ENCODE measurements at regions of chr6 and their contacts with region 1.

Region 1: GRCh38 chr6:84428300-84428907 is 201.0 kb upstream of the CEP162 start:
- DNase-seq: no peak
- ATAC-seq: peak; percentile 91
- H3K4me3 ChIP-seq: no peak overlapping the region
- H3K27ac ChIP-seq: no peak overlapping the region
- H3K4me1 ChIP-seq: no peaks in the 10 kb centered on the region
- H3K27me3 ChIP-seq: no peaks in the 10 kb centered on the region
- CTCF ChIP-seq: peak; percentile 74 to 79 (median 77)
- EP300 ChIP-seq: no peak
- POLR2A ChIP-seq: no peak
- RAD21 ChIP-seq: peak; percentile 69

Region 2: DNA sequence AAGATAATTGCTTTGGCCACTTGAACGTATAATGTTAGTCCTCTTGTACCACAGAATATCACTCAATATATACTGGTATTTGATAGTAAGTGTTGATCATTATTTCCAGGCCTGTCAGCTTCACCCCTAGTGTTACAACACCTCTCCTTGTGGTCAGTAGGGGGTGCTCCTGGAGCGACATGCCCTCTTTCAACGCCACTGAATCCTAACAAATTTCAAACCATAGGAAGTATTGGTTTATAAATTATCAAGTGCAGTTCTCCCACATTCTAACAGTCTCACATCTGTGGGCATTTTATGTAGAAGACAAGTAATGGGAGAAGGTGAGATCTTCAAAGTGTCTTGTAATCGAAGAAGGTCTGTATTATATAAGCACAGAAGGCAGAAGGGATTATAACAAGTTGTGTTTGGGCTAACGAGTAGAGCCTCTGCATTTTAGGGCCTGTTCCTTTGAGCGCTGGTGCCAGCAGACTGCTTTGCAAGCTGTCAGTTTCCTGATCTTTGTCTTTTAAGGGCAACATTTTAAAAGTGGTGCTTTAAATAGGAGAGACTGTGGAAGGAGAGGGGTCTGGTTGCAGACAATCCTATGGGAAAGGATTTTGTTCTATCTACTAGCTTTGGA is 143.9 kb before region 1 on chr6:
- CTCF ChIA-PET with region 1: interaction called, 49 read pairs
- POLR2A ChIA-PET with region 1: interaction called, 3 read pairs
- RAD21 ChIA-PET with region 1: interaction called, 16 read pairs
- SMC1A ChIA-PET with region 1: interaction called, 50 read pairs
- in situ Hi-C with region 1: no loop called
- intact Hi-C with region 1: loop called (anchors 5 kb)
- DNase-seq: no peak
- ATAC-seq: peak; percentile 88
- H3K4me3 ChIP-seq: no peak overlapping the region
- H3K27ac ChIP-seq: no peak overlapping the region
- H3K4me1 ChIP-seq: no peaks in the 10 kb centered on the region
- H3K27me3 ChIP-seq: no peaks in the 10 kb centered on the region
- CTCF ChIP-seq: peak; percentile 55 to 63 (median 62)
- EP300 ChIP-seq: no peak
- POLR2A ChIP-seq: no peak
- RAD21 ChIP-seq: peak; percentile 80

Region 3: GRCh38 chr6:84449220-84449619 is 20.8 kb after region 1 on chr6:
- CTCF ChIA-PET with region 1: interaction called, 18 read pairs
- POLR2A ChIA-PET with region 1: no interaction called
- RAD21 ChIA-PET with region 1: interaction called, 4 read pairs
- SMC1A ChIA-PET with region 1: interaction called, 17 read pairs
- in situ Hi-C with region 1: no loop called
- intact Hi-C with region 1: no loop called
- DNase-seq: no peak
- ATAC-seq: no peak
- H3K4me3 ChIP-seq: no peak overlapping the region
- H3K27ac ChIP-seq: no peak overlapping the region
- H3K4me1 ChIP-seq: no peaks in the 10 kb centered on the region
- H3K27me3 ChIP-seq: no peaks in the 10 kb centered on the region
- CTCF ChIP-seq: no peak
- EP300 ChIP-seq: no peak
- POLR2A ChIP-seq: no peak
- RAD21 ChIP-seq: no peak

Region 4: GRCh38 chr6:84568971-84569370 is 140.6 kb after region 1 on chr6:
- CTCF ChIA-PET with region 1: interaction called, 55 read pairs
- POLR2A ChIA-PET with region 1: no interaction called
- RAD21 ChIA-PET with region 1: interaction called, 27 read pairs
- SMC1A ChIA-PET with region 1: interaction called, 37 read pairs
- in situ Hi-C with region 1: no loop called
- intact Hi-C with region 1: loop called (anchors 1 kb)
- DNase-seq: no peak
- ATAC-seq: peak; percentile 58; the same call in 2 of the 3 replicates
- H3K4me3 ChIP-seq: no peak overlapping the region
- H3K27ac ChIP-seq: no peak overlapping the region
- H3K4me1 ChIP-seq: no peaks in the 10 kb centered on the region
- H3K27me3 ChIP-seq: no peaks in the 10 kb centered on the region
- CTCF ChIP-seq: peak in 2 of 3 experiments; percentile 10 to 41; a peak in 2 of 6 replicates
- EP300 ChIP-seq: no peak
- POLR2A ChIP-seq: no peak
- RAD21 ChIP-seq: peak; percentile 51

Region 5: DNA sequence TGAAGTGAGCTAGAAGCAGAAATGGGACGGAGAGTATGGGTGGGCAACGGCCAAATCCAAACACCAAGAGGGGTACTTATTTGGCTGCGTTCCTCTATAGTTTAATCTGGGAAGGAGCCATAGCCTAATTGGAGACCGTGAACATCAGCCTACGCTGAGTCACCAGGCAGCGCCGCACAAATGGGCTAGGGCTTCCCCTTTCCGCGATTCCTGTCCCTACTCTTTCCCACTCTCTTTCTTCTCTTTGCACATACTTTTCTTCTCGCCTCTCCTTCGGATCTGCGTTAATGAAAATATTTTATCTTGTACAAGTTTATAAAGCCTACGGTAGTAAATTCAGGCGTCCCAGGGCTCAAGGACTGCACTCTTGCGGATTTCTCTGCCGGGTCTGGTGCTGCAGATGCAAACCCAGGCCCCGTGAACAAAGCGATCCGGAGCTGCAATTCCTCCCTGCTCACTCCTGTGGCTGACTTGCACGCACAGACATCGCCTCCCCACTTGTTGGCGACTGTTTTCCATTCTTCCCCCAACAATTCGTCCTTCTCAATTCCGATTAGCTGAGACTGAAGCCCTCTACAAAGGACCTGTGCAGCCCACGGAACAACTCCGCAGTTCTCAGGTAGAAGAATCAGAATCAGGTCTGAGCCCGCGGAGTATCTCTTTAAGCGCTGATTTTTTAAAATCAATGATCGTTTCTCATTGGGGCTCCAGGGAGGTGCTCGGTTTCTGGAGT is 340.2 kb after region 1 on chr6:
- CTCF ChIA-PET with region 1: interaction called, 11 read pairs
- POLR2A ChIA-PET with region 1: no interaction called
- RAD21 ChIA-PET with region 1: interaction called, 3 read pairs
- SMC1A ChIA-PET with region 1: interaction called, 4 read pairs
- in situ Hi-C with region 1: no loop called
- intact Hi-C with region 1: no loop called
- DNase-seq: no peak
- ATAC-seq: peak; percentile 72
- H3K4me3 ChIP-seq: no peak overlapping the region
- H3K27ac ChIP-seq: no peak overlapping the region
- H3K4me1 ChIP-seq: no peaks in the 10 kb centered on the region
- H3K27me3 ChIP-seq: peaks cover 2 to 20% of the 10 kb centered on the region in 2 experiments
- CTCF ChIP-seq: no peak
- EP300 ChIP-seq: no peak
- POLR2A ChIP-seq: no peak
- RAD21 ChIP-seq: no peak

Region 6: DNA sequence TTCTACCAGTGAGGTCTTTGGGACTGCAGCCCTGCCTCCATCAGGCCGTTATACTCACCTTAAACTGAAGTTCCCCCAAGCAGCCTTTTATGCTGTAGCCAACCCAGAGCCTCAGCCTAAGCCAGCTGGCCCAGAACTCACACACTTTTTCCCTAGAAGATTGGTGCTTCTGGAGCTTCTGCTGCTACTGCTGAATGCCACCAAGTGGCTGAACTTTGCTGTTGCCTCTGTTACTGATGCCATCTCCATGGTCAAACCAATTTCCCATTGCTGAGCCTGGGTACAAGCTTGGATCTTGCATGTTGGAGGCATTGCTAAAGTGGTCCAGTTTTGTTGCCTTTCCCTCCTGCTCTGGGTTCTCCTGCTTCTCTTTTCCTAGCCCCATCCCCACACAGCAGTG is 351.0 kb after region 1 on chr6:
- CTCF ChIA-PET with region 1: interaction called, 14 read pairs
- POLR2A ChIA-PET with region 1: no interaction called
- RAD21 ChIA-PET with region 1: interaction called, 8 read pairs
- SMC1A ChIA-PET with region 1: interaction called, 3 read pairs
- in situ Hi-C with region 1: no loop called
- intact Hi-C with region 1: loop called (anchors 1 kb)
- DNase-seq: no peak
- ATAC-seq: no peak
- H3K4me3 ChIP-seq: no peak overlapping the region
- H3K27ac ChIP-seq: no peak overlapping the region
- H3K4me1 ChIP-seq: no peaks in the 10 kb centered on the region
- H3K27me3 ChIP-seq: peaks cover 0 to 2% of the 10 kb centered on the region in 2 experiments; a peak in 3 of 4 replicates
- CTCF ChIP-seq: 0 out of 6 replicates have a peak, but pooled peaks of 1 of the 3 experiments have one; percentile 10
- EP300 ChIP-seq: no peak
- POLR2A ChIP-seq: no peak
- RAD21 ChIP-seq: no peak

Region 7: DNA sequence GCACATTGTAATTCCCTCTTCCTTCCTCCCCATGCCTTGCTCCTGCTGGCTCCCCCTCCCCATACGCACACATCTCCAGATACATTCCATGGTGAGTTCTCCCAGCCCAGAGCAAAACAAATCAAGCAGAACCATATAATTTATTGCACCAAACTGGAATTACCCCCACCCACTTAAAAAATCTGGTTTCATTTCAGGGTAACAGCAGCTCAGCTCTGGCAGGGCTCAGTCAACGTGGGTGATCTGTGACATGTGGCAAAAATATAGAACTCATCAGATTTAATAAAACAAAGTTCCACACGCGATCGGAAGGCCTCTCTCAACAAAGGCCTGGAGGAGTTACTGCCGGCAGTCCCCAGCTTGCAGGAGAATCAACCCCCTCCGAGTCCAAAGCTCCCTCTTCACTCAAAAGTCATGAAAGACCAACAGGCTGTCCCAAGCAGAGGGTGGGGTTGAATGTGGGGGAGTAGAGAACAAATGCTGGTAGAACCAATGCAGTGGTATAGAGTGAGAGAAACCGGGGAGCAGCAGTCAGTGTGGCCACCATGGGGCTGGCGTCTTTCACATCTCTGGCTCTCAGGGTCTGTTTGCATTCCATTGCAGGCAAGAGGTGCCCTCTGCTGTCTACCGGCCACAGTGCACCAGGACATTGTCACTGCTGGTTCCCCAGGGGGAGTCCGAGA is 698.2 kb after region 1 on chr6:
- CTCF ChIA-PET with region 1: interaction called, 24 read pairs
- POLR2A ChIA-PET with region 1: no interaction called
- RAD21 ChIA-PET with region 1: interaction called, 5 read pairs
- SMC1A ChIA-PET with region 1: interaction called, 5 read pairs
- in situ Hi-C with region 1: loop called (anchors 10 kb)
- intact Hi-C with region 1: loop called (anchors 1 kb)
- DNase-seq: no peak
- ATAC-seq: peak; percentile 97
- H3K4me3 ChIP-seq: no peak overlapping the region
- H3K27ac ChIP-seq: no peak overlapping the region
- H3K4me1 ChIP-seq: no peaks in the 10 kb centered on the region
- H3K27me3 ChIP-seq: no peaks in the 10 kb centered on the region
- CTCF ChIP-seq: peak; percentile 51 to 70 (median 51); a peak in 5 of 6 replicates
- EP300 ChIP-seq: no peak
- POLR2A ChIP-seq: no peak
- RAD21 ChIP-seq: peak; percentile 59